B cell (primary cell): ENCODE measurements at regions of chr9 and their contacts with region 1.

Region 1: GRCh38 chr9:89505911-89506310 is 8.0 kb upstream of the SEMA4D start:
- DNase-seq: no peak
- ATAC-seq: no peak
- H3K4me3 ChIP-seq: no peak overlapping the region
- H3K4me3 Mint-ChIP-seq: no peak overlapping the region
- H3K27ac ChIP-seq: peak overlapping the region; percentile 26 to 79
- H3K27ac Mint-ChIP-seq: peak overlapping the region; percentile 69
- H3K4me1 ChIP-seq: peaks cover 62 to 65% of the 10 kb centered on the region in 2 donors
- H3K4me1 Mint-ChIP-seq: peaks cover 79% of the 10 kb centered on the region
- H3K27me3 ChIP-seq: no peaks in the 10 kb centered on the region
- H3K27me3 Mint-ChIP-seq: no peaks in the 10 kb centered on the region
- CTCF ChIP-seq: no peak

Region 2: GRCh38 chr9:89442981-89443814 is 62.7 kb before region 1 on chr9:
- CTCF ChIA-PET with region 1: no interaction called
- POLR2A ChIA-PET with region 1: interaction called, 3 read pairs
- intact Hi-C with region 1: loop called (anchors 5 kb)
- DNase-seq: no peak
- ATAC-seq: peak; percentile 77
- H3K4me3 ChIP-seq: peak overlapping the region in 1 of 5 experiments; percentile 37
- H3K4me3 Mint-ChIP-seq: peak overlapping the region; percentile 68
- H3K27ac ChIP-seq: peak overlapping the region in 1 of 2 donors; percentile 38
- H3K27ac Mint-ChIP-seq: peak overlapping the region; percentile 68
- H3K4me1 ChIP-seq: peaks cover 46 to 68% of the 10 kb centered on the region in 2 donors
- H3K4me1 Mint-ChIP-seq: peaks cover 82% of the 10 kb centered on the region
- H3K27me3 ChIP-seq: no peaks in the 10 kb centered on the region
- H3K27me3 Mint-ChIP-seq: no peaks in the 10 kb centered on the region
- CTCF ChIP-seq: no peak